ENCODE measurements at regions of chr12 and their contacts with region 1.

Region 1: GRCh38 chr12:95224202-95225170 is 6.9 kb downstream of the VEZT start:
- DNase-seq: peak; percentile 84
- ATAC-seq: peak; percentile 73
- H3K4me3 ChIP-seq: no peak overlapping the region
- H3K27ac ChIP-seq: no peak overlapping the region
- H3K4me1 ChIP-seq: peaks cover 11% of the 10 kb centered on the region
- H3K27me3 ChIP-seq: no peaks in the 10 kb centered on the region
- CTCF ChIP-seq: no peak
- POLR2A ChIP-seq: no peak
- RAD21 ChIP-seq: no peak

Region 2: GRCh38 chr12:95262808-95263207 is 38.3 kb after region 1 on chr12:
- CTCF ChIA-PET with region 1: no interaction called
- POLR2A ChIA-PET with region 1: no interaction called
- dilution Hi-C with region 1: no loop called
- in situ Hi-C with region 1: no loop called
- intact Hi-C with region 1: loop called (anchors 5 kb)
- DNase-seq: peak; percentile 14
- ATAC-seq: no peak
- H3K4me3 ChIP-seq: no peak overlapping the region
- H3K27ac ChIP-seq: no peak overlapping the region
- H3K4me1 ChIP-seq: no peaks in the 10 kb centered on the region; the same call in none of the 2 replicates
- H3K27me3 ChIP-seq: no peaks in the 10 kb centered on the region
- CTCF ChIP-seq: no peak
- POLR2A ChIP-seq: no peak
- RAD21 ChIP-seq: no peak